Activated naive CD4-positive, alpha-beta T cell treated with anti-CD3 and anti-CD28 coated beads for 36 hours (primary cell): ENCODE measurements at regions of chr3 and their contacts with region 1.

Region 1: DNA sequence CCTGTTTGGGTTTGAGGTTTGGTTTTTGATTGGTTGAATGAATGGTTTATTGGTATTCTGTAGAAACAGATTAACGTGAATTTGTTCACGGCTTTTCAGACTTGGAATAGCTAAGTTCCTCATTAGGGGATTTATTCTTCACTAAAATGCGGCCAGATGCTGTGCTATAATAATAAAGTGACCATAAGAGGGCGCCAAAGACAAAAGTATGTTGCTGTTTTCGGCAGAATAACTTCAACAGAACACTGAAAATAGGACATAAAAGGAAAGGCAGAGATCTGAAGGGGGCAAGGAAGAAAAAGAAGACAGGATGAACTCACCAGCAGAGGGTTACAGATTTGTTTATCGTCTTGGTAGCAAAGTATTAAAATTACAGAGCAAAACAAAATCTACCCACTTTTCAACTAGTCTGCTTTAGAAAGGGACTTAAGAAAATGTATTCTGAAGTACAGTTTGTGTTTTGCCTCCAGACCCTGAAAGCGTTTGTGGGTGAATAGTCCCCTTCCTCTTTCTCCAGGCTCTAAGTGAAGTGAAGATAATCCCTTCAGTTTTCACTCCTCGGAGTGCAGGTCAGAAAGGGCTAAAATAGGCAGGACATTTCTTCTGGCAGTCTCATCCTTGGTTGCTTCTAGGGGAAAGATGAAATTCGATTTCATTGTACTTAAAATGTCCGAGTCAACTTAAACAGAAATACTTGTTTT is 147.6 kb downstream of the IL20RB start:
- DNase-seq: peak; percentile 25
- H3K4me3 Mint-ChIP-seq: no peak overlapping the region
- H3K27ac Mint-ChIP-seq: no peak overlapping the region
- H3K4me1 Mint-ChIP-seq: no peaks in the 10 kb centered on the region
- H3K27me3 Mint-ChIP-seq: peaks cover 11% of the 10 kb centered on the region

Region 2: DNA sequence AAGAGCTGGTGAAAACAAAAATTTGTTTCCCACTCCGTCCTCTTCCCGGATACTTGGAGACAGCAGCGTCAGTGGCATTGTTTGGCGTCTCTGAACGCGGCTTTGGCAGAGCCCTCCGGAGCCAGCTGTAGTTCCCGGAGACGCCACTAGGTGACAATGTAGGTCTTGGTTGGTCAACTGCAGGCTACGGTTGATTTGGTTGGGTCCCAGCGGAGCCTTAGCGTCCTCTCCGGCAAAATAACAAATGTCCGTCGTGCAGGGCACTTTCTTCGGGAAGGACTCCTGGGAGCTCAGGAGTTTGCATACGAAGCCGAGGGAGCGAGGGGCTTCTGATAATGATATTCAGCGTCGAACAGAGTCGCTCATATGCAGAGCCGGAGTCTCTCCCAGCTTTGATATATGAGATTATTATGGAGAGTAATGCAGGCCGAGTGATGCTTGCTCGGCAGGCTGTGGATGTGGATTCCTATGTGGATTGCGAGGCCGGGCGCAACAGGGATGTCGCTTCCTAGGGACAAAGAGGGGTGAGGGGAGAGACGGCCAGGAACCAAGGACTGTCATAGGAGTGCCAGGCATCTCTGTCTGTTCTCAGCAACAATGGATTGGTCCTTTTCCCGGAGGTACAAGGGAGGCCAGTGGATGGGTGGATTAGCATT is 72.8 kb before region 1 on chr3:
- CTCF ChIA-PET with region 1: interaction called, 4 read pairs
- intact Hi-C with region 1: loop called (anchors 5 kb)
- DNase-seq: peak; percentile 91
- H3K4me3 Mint-ChIP-seq: peak overlapping the region; percentile 40
- H3K27ac Mint-ChIP-seq: no peak overlapping the region
- H3K4me1 Mint-ChIP-seq: peaks cover 7% of the 10 kb centered on the region
- H3K27me3 Mint-ChIP-seq: peaks cover 15% of the 10 kb centered on the region

Region 3: DNA sequence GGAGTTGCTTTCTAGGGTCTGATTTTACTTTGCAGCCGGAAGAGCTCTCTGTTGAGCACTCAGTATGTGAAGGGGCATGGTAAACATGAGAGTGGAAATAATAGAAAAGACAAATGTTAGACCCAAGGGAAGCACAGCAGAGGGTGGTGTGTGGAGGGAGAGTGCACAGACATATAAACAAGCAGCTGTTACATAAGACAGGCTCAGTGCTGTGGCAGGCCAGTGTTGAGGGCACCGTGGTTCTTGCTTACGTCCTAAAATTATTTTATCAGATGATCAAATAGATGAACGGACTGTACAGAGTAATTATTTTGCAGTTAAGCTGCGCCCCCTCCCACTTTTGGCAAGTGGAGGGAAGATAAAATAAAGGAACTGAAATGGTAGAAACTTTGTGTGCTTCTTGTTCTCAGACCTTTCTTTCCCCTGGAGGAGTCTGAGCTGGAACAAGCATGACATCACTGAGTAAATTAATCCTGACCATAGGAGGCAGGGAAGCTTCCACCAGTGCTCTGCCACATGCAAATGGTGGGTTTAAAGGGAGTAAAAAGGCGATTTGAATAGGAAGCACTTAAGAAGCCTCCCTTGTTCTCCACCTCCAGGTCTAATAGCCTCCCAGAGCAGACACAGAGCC is 57.9 kb after region 1 on chr3:
- CTCF ChIA-PET with region 1: no interaction called
- intact Hi-C with region 1: loop called (anchors 10 kb)
- DNase-seq: no peak
- H3K4me3 Mint-ChIP-seq: no peak overlapping the region
- H3K27ac Mint-ChIP-seq: no peak overlapping the region
- H3K4me1 Mint-ChIP-seq: no peaks in the 10 kb centered on the region
- H3K27me3 Mint-ChIP-seq: no peaks in the 10 kb centered on the region

Region 4: GRCh38 chr3:137946345-137946973 is 841.0 kb after region 1 on chr3:
- CTCF ChIA-PET with region 1: interaction called, 7 read pairs
- intact Hi-C with region 1: loop called (anchors 1 kb)
- DNase-seq: peak; percentile 51
- H3K4me3 Mint-ChIP-seq: no peak overlapping the region
- H3K27ac Mint-ChIP-seq: no peak overlapping the region
- H3K4me1 Mint-ChIP-seq: peaks cover 3% of the 10 kb centered on the region
- H3K27me3 Mint-ChIP-seq: no peaks in the 10 kb centered on the region

Region 5: GRCh38 chr3:138051946-138052802 is 946.7 kb after region 1 on chr3:
- CTCF ChIA-PET with region 1: interaction called, 5 read pairs
- intact Hi-C with region 1: loop called (anchors 1 kb)
- DNase-seq: peak; percentile 48
- H3K4me3 Mint-ChIP-seq: no peak overlapping the region
- H3K27ac Mint-ChIP-seq: no peak overlapping the region
- H3K4me1 Mint-ChIP-seq: no peaks in the 10 kb centered on the region
- H3K27me3 Mint-ChIP-seq: peaks cover 24% of the 10 kb centered on the region